ENCODE measurements at regions of chr2 and their contacts with region 1.

Region 1: DNA sequence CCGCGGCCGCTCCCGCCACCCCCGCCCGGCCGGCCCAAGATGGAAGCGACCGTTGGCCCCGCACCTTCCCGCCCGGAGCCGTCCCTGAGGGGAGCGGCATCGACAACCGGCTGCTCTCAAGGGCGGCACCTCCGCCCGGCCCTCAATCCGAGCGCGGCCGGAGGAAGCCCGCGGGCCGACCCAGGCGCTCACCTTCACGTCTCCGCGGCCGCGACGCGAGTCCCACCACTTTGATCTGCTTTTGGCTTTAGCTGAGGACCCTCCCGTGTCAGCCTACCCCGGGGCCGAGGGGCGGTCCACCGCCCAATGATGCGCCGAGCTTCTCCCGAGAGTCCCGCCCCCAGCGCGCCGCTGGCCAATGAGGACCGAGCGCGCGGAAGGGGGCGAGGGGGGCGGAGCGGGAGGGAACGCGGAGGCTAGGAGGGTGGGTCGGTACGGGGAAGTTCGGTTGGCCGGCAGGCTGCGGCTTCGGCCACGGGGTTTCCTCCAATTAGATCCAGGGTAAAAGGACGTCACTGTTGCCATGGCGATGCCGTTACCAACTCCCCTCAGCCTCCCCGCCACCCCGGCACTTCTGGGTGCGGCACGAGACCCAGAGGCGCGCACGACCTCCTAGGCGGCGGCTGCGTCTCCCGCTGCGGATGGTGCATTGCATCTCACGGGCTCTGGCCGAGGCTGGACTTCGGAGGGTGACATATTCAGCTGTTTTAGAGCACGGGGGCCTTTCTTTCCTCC is at the start of gene YWHAQ:
- DNase-seq: peak; percentile 99 to 100
- H3K4me3 ChIP-seq: peak within 1 kb of the TSS; percentile 89
- H3K4me3 Mint-ChIP-seq: peak within 1 kb of the TSS; percentile 93
- H3K27ac Mint-ChIP-seq: peak within 1 kb of the TSS; percentile 92
- H3K4me1 ChIP-seq: peaks cover 25% of the 10 kb centered on the region
- H3K4me1 Mint-ChIP-seq: peaks cover 41% of the 10 kb centered on the region
- H3K27me3 ChIP-seq: no peaks in the 10 kb centered on the region
- H3K27me3 Mint-ChIP-seq: no peaks in the 10 kb centered on the region
- CTCF ChIP-seq: no peak
- total RNA-seq, gene YWHAQ: 344 and 365 TPM in 2 replicates

Region 2: DNA sequence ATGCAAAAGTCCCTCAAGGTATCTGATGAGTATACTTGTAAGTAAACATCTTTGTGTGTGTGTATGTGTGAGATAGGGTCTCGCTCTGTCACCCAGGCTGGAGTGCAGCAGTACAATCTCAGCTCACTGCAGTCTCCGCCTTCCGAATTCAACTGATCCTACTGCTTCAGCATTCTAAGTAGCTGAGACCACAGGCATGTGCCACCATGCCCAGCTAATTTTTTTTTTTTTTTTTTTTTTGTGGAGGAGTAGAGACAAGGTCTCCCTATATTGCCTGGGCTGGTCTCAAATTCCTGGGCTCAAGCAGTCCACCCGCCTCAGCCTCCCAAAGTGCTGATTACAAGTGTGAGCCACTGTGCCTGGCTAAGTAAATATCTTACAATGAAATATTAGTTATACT is 98.5 kb before region 1 on chr2:
- CTCF ChIA-PET with region 1: no interaction called
- POLR2A ChIA-PET with region 1: no interaction called
- intact Hi-C with region 1: no loop called
- DNase-seq: no peak
- H3K4me3 ChIP-seq: no peak overlapping the region
- H3K4me3 Mint-ChIP-seq: no peak overlapping the region
- H3K27ac Mint-ChIP-seq: no peak overlapping the region
- H3K4me1 ChIP-seq: no peaks in the 10 kb centered on the region
- H3K4me1 Mint-ChIP-seq: no peaks in the 10 kb centered on the region
- H3K27me3 ChIP-seq: no peaks in the 10 kb centered on the region
- H3K27me3 Mint-ChIP-seq: no peaks in the 10 kb centered on the region
- CTCF ChIP-seq: no peak

Region 3: GRCh38 chr2:9555297-9556141 is 75.4 kb before region 1 on chr2 and contains the start of gene ADAM17:
- CTCF ChIA-PET with region 1: interaction called, 8 read pairs
- POLR2A ChIA-PET with region 1: interaction called, 52 read pairs
- intact Hi-C with region 1: loop called (anchors 2 kb)
- DNase-seq: peak; percentile 97 to 98
- H3K4me3 ChIP-seq: peak within 1 kb of the TSS; percentile 92
- H3K4me3 Mint-ChIP-seq: peak within 1 kb of the TSS; percentile 91
- H3K27ac Mint-ChIP-seq: peak within 1 kb of the TSS; percentile 90
- H3K4me1 ChIP-seq: peaks cover 27% of the 10 kb centered on the region; the same call in 1 of the 2 replicates
- H3K4me1 Mint-ChIP-seq: peaks cover 30% of the 10 kb centered on the region
- H3K27me3 ChIP-seq: no peaks in the 10 kb centered on the region
- H3K27me3 Mint-ChIP-seq: no peaks in the 10 kb centered on the region
- CTCF ChIP-seq: peak; percentile 61 to 69
- total RNA-seq, gene ADAM17: 36.3 and 40.5 TPM in 2 replicates

Region 4: GRCh38 chr2:9644603-9645002 is 13.7 kb after region 1 on chr2:
- CTCF ChIA-PET with region 1: no interaction called
- POLR2A ChIA-PET with region 1: interaction called, 7 read pairs
- intact Hi-C with region 1: loop called (anchors 1 kb)
- DNase-seq: peak; percentile 71 to 79
- H3K4me3 ChIP-seq: no peak overlapping the region
- H3K4me3 Mint-ChIP-seq: peak overlapping the region; percentile 59
- H3K27ac Mint-ChIP-seq: peak overlapping the region; percentile 83
- H3K4me1 ChIP-seq: peaks cover 25% of the 10 kb centered on the region
- H3K4me1 Mint-ChIP-seq: peaks cover 38% of the 10 kb centered on the region
- H3K27me3 ChIP-seq: no peaks in the 10 kb centered on the region
- H3K27me3 Mint-ChIP-seq: no peaks in the 10 kb centered on the region
- CTCF ChIP-seq: no peak

Region 5: DNA sequence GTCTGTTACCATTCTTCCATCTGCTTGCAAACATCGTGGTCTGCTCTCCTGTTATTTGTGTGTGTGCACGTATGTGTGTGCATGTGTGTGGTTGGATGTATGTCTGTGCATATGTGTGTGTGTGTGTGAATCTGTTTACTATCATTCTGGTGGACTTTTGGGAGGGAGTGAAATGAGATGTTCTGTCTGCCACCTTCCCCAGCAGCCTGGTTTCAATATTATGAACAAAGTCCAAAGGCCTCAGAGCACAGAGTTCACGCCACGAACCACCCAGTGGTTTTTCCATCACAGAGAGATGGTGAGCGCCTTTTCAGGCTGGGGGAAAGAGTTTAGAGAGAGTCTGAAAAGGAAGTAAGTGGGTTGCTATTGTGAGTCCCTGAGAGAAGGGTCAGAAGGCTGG is 67.0 kb after region 1 on chr2:
- CTCF ChIA-PET with region 1: no interaction called
- POLR2A ChIA-PET with region 1: interaction called, 13 read pairs
- intact Hi-C with region 1: loop called (anchors 2 kb)
- DNase-seq: no peak
- H3K4me3 ChIP-seq: no peak overlapping the region
- H3K4me3 Mint-ChIP-seq: no peak overlapping the region
- H3K27ac Mint-ChIP-seq: peak overlapping the region; percentile 69
- H3K4me1 ChIP-seq: peaks cover 38% of the 10 kb centered on the region
- H3K4me1 Mint-ChIP-seq: peaks cover 19% of the 10 kb centered on the region
- H3K27me3 ChIP-seq: no peaks in the 10 kb centered on the region
- H3K27me3 Mint-ChIP-seq: no peaks in the 10 kb centered on the region
- CTCF ChIP-seq: no peak

Region 6: GRCh38 chr2:9789371-9789968 is 158.6 kb after region 1 on chr2:
- CTCF ChIA-PET with region 1: no interaction called
- POLR2A ChIA-PET with region 1: no interaction called
- intact Hi-C with region 1: no loop called
- DNase-seq: no peak
- H3K4me3 ChIP-seq: no peak overlapping the region
- H3K4me3 Mint-ChIP-seq: no peak overlapping the region
- H3K27ac Mint-ChIP-seq: no peak overlapping the region
- H3K4me1 ChIP-seq: peaks cover 4% of the 10 kb centered on the region; the same call in 1 of the 2 replicates
- H3K4me1 Mint-ChIP-seq: no peaks in the 10 kb centered on the region
- H3K27me3 ChIP-seq: no peaks in the 10 kb centered on the region
- H3K27me3 Mint-ChIP-seq: no peaks in the 10 kb centered on the region
- CTCF ChIP-seq: no peak

Region 7: DNA sequence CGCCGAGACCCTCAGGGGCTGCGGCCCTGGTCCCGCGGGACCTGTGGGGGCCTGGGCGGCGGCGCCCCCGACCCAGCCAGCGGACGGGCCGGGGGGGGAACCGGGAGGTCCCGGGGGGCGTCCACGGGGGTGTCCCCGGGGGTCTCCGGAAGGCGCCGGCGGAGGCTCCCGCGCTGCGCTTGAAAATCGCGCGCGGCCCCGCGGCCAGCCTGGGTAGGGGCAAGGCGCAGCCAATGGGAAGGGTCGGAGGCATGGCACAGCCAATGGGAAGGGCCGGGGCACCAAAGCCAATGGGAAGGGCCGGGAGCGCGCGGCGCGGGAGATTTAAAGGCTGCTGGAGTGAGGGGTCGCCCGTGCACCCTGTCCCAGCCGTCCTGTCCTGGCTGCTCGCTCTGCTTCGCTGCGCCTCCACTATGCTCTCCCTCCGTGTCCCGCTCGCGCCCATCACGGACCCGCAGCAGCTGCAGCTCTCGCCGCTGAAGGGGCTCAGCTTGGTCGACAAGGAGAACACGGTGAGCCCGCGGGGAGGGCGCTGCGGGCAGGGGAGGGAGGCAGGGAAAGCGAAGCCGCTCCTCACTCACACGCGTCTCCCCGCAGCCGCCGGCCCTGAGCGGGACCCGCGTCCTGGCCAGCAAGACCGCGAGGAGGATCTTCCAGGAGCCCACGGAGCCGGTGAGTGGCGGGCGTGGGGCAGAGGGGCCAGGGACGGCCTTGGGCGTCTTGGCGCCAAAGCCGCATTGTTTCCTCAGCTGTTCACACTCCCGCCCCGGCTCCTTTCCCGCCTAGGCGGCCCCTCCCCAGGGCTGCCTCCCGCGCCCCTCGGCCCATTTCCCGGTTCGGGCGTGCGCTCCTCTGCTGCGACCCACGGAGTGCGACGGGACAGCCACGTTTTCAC is 491.7 kb after region 1 on chr2 and contains the start of gene RRM2:
- CTCF ChIA-PET with region 1: no interaction called
- POLR2A ChIA-PET with region 1: no interaction called
- intact Hi-C with region 1: loop called (anchors 5 kb)
- DNase-seq: peak; percentile 98
- H3K4me3 ChIP-seq: peak within 1 kb of the TSS; percentile 66
- H3K4me3 Mint-ChIP-seq: peak within 1 kb of the TSS; percentile 96
- H3K27ac Mint-ChIP-seq: peak within 1 kb of the TSS; percentile 96
- H3K4me1 ChIP-seq: peaks cover 11% of the 10 kb centered on the region
- H3K4me1 Mint-ChIP-seq: peaks cover 13% of the 10 kb centered on the region
- H3K27me3 ChIP-seq: no peaks in the 10 kb centered on the region
- H3K27me3 Mint-ChIP-seq: no peaks in the 10 kb centered on the region
- CTCF ChIP-seq: no peak
- total RNA-seq, gene RRM2: 160 and 169 TPM in 2 replicates